Thyroid gland (tissue), 4 donors: ENCODE measurements at regions of chr16 and their contacts with region 1.

Region 1: DNA sequence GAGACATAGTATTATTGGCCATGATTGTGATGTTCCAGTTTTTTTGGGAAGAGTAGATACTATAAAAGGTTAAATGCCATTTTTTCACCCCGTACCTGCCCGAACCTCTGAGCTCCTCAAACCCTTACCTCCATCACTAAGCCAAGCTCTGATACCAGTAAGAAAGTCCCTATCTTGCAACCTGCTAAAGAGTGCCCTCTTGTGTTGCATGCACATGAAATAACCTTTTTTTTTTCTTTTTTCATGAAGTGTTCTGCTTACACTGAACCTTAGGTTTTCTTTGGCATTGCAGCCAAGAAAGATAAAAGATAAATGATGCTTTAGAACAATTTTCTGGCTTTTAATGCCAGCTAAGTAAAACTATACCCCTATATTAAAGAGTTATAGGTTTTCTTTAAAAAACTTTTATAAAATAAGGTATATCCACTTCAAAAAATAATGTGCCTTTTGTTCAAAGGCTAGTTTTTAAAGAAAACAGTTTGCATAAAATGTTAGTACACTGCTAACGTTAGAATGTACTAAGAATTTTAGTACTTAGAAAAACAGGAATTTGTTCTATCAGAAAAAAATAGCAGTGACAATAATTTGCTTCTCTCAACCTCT is 295.3 kb upstream of the PMFBP1 start:
- DNase-seq: no peak
- H3K4me3 ChIP-seq: no peak overlapping the region
- H3K27ac ChIP-seq: no peak overlapping the region
- H3K4me1 ChIP-seq: no peaks in the 10 kb centered on the region
- H3K27me3 ChIP-seq: no peaks in the 10 kb centered on the region
- CTCF ChIP-seq: peak in 3 of 6 experiments; percentile 39 to 52 (median 51)
- POLR2A ChIP-seq: no peak

Region 2: DNA sequence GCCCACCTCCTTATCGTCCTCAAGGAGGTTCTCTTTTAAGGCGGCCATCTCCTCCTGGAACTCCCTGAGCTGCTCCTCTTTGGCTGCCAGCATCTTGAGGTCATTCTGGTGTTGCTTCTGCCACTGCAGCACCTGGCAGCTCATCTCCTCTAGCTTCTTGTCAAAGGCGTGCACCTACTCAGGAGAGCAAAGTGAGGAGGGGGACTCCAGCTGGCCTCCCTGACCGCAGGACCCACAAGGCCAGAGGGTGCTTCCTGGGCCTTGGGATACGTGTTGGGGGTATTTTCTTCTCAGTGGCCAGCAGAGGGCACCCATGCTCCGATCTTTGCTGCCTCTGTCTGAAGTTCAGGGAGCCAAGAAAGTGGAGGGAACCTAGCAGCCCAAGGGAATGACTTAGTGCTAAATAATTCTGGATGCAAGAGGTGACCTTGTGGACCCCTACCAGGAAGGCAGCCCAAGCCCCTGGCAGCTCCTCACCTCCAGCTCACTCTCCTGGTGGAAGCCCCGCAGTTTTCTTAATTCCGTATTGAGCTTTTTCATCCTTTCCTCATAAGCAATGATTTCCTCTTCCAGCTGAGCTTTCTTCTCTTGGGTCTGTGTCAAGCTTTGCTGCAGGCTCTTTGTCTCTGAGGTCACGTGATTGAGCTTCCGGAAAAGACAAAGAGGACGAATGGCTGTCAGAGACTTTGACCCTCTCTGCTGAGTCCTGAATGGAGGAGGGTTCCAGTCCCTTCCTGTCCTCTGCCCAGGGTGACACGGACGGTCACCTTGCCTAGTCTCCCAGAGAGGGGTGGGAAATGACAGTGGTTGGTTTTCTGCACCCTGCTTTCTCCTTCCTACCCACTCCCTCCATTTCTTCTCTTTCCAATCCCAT is 342.3 kb before region 1 on chr16:
- intact Hi-C with region 1: loop called (anchors 10 kb)
- DNase-seq: peak; percentile 58 to 76
- H3K4me3 ChIP-seq: no peak overlapping the region
- H3K27ac ChIP-seq: no peak overlapping the region
- H3K4me1 ChIP-seq: no peaks in the 10 kb centered on the region
- H3K27me3 ChIP-seq: no peaks in the 10 kb centered on the region
- CTCF ChIP-seq: peak; percentile 32 to 81 (median 68)
- POLR2A ChIP-seq: no peak